Panc1 (cell line): ENCODE measurements at regions of chr15 and their contacts with region 1.

Region 1: DNA sequence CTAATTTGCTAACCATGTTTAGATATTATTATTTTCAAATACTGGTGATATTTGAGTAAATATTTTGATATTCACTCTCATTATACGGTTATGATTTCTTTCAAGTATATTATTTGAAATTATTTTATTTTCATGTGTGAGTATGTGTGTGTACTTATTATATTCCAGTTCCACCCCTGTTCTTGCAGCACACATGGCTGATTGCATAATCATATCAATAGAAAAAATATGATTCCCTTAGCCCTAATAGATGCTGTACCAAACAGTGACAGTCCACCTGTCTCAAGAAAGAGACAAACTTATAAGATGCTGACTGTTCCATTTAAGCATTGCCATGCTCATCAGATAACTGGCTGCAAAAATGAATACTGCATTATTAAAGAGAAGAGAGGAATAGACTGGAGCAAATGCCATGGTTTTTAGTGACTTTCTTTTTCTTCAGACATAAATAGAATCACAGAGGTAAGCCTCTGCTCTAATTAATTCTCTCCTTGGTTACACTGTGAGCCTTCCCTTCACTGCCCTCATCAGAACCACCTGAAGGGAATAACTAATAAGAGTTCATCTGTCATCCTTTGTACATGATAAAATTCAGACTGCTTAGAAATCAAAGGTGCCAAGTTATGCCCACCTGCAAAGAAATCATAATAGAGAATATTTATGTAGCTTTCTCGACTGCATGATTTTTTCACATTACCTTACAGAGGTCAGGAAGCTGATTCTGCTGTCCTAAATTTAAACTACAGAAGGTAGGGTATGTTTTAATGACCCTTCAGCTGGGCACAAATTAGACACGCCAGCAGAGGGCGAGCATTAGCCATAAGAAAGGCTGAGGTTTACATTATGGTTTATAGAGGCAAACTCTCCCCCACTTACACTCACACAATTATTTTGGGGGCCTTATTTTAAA is 15.7 kb upstream of the UNC13C start:
- DNase-seq: no peak
- ATAC-seq: no peak
- H3K4me3 ChIP-seq: no peak overlapping the region
- H3K27ac ChIP-seq: no peak overlapping the region
- H3K4me1 ChIP-seq: no peaks in the 10 kb centered on the region
- H3K27me3 ChIP-seq: no peaks in the 10 kb centered on the region
- CTCF ChIP-seq: peak; percentile 76

Region 2: DNA sequence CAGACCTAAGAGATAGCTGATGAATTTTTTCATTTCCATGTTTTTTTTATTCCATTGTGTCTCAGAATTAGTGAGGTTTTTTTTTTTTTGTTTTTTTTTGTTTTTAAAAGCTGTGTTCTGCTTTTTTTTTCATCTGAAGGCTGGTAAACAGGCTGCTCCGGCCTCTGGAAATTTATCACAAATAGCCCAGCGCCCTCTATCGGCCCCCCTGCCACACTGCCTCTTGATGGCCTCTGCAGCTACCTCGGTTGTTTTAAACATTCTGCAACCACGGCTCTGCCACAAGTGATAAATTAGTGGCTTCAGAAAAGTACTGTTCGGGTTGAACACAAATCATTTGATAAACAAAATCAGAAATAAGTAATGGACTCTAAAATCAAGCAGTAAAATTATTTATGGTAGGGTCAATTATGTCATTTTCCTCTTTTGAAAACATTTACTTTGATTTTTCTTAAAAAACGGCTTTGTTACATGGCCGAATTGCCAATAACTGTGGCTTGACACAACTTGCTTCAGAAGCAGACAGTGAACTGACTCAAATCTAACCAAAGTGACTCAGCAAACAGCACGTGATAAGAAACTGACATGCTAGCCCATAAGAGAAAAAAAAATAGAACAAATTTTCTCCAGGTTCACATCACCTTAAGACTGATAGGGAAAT is 1146.4 kb after region 1 on chr15:
- CTCF ChIA-PET with region 1: no interaction called
- POLR2A ChIA-PET with region 1: no interaction called
- in situ Hi-C with region 1: no loop called
- intact Hi-C with region 1: loop called (anchors 2 kb)
- DNase-seq: peak; percentile 12
- ATAC-seq: no peak; the same call in 1 of the 2 replicates
- H3K4me3 ChIP-seq: no peak overlapping the region
- H3K27ac ChIP-seq: no peak overlapping the region
- H3K4me1 ChIP-seq: no peaks in the 10 kb centered on the region
- H3K27me3 ChIP-seq: no peaks in the 10 kb centered on the region
- CTCF ChIP-seq: peak; percentile 92

Region 3: DNA sequence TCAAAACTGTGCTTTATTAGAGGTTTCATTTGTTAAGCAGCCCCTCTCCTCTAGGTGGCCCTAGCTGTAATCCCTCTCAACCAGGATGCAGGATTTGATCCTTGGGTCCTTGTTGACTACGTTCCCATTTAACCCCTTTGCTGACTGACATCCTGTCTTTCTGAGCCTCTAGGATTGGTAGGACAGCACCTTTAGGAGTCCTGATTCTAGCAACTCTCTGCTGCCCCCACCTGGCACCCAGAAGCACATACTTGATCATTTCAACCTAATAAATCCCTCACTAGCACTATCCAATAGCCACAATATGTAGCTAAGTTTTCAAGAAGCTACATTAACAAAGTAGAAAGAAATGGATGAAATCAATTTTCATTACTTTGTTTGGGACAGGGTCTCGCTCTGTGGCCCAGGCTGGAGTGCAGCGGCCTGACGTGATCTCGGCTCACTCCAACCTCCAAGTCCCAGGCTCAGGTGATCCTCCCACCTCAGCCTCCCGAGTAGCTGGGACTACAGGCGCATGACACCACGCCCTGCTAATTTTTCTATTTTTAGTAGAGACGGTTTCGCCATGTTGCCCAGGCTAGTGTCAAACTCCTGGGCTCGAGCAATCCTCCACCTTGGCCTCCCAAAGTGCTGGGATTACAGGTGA is 1205.9 kb after region 1 on chr15:
- CTCF ChIA-PET with region 1: no interaction called
- POLR2A ChIA-PET with region 1: no interaction called
- in situ Hi-C with region 1: no loop called
- intact Hi-C with region 1: loop called (anchors 5 kb)
- DNase-seq: peak; percentile 48
- ATAC-seq: peak; percentile 98
- H3K4me3 ChIP-seq: no peak overlapping the region
- H3K27ac ChIP-seq: no peak overlapping the region
- H3K4me1 ChIP-seq: no peaks in the 10 kb centered on the region
- H3K27me3 ChIP-seq: no peaks in the 10 kb centered on the region
- CTCF ChIP-seq: peak; percentile 94